IMR-90 (cell line): ENCODE measurements at regions of chr10 and their contacts with region 1.

Region 1: GRCh38 chr10:92938841-92939240 is 90.5 kb downstream of the EXOC6 start:
- DNase-seq: no peak
- ATAC-seq: no peak
- H3K4me3 ChIP-seq: no peak overlapping the region
- H3K27ac ChIP-seq: no peak overlapping the region
- H3K4me1 ChIP-seq: no peaks in the 10 kb centered on the region
- H3K27me3 ChIP-seq: no peaks in the 10 kb centered on the region
- CTCF ChIP-seq: no peak
- POLR2A ChIP-seq: no peak
- RAD21 ChIP-seq: no peak

Region 2: GRCh38 chr10:92263396-92263795 is 675.4 kb before region 1 on chr10:
- CTCF ChIA-PET with region 1: no interaction called
- POLR2A ChIA-PET with region 1: no interaction called
- dilution Hi-C with region 1: no loop called
- in situ Hi-C with region 1: no loop called
- intact Hi-C with region 1: no loop called
- DNase-seq: no peak
- ATAC-seq: no peak
- H3K4me3 ChIP-seq: no peak overlapping the region
- H3K27ac ChIP-seq: no peak overlapping the region
- H3K4me1 ChIP-seq: no peaks in the 10 kb centered on the region
- H3K27me3 ChIP-seq: no peaks in the 10 kb centered on the region
- CTCF ChIP-seq: no peak
- POLR2A ChIP-seq: no peak
- RAD21 ChIP-seq: no peak

Region 3: GRCh38 chr10:92891885-92892704 is 46.7 kb before region 1 on chr10:
- CTCF ChIA-PET with region 1: no interaction called
- POLR2A ChIA-PET with region 1: no interaction called
- dilution Hi-C with region 1: no loop called
- in situ Hi-C with region 1: no loop called
- intact Hi-C with region 1: loop called (anchors 5 kb)
- DNase-seq: peak; percentile 91
- ATAC-seq: peak; percentile 89
- H3K4me3 ChIP-seq: no peak overlapping the region
- H3K27ac ChIP-seq: no peak overlapping the region
- H3K4me1 ChIP-seq: peaks cover 8% of the 10 kb centered on the region
- H3K27me3 ChIP-seq: no peaks in the 10 kb centered on the region
- CTCF ChIP-seq: no peak
- POLR2A ChIP-seq: no peak
- RAD21 ChIP-seq: no peak